Pancreas (tissue), 10 donors: ENCODE measurements at regions of chr7 and their contacts with region 1.

Region 1: DNA sequence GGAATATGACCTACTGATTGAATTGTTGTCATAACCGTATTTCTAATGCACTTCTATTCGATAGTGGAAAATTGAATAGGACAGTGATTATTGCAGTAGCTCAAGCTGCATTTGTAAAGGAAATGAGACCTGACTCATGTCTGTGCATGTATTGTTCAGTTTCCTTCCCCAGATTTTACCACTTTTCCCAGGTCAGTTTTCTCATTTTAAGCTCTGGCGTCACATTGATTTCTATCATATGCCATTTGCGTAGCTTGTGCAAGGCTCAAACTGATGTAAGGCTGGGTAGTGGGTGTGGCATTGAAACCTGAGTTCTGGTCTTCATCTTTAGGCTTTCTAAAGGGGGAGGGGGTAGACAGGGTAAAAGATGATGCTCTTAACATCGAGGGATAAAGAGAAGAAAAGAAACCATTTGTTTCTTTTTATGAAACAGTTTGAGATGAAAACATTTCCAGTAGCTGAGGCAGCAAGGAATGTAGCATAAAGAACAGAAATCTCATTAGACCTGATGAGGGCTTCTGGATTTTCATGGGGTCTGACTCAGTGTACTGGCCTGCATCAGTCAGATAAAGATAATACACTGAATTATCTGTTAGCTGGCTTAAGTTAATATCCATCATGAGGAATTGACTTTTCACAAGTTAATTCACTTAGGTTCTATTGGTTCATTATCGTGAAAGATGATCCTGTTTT is 182.3 kb upstream of the CDCA7L start:
- DNase-seq: no peak
- ATAC-seq: no peak
- H3K4me3 ChIP-seq: no peak overlapping the region
- H3K27ac ChIP-seq: no peak overlapping the region
- H3K4me1 ChIP-seq: no peaks in the 10 kb centered on the region
- H3K27me3 ChIP-seq: no peaks in the 10 kb centered on the region
- CTCF ChIP-seq: no peak

Region 2: GRCh38 chr7:21550826-21551544 is 577.0 kb before region 1 on chr7:
- intact Hi-C with region 1: no loop called
- DNase-seq: no peak
- ATAC-seq: peak in 2 of 4 donors; percentile 31 to 35
- H3K4me3 ChIP-seq: no peak overlapping the region
- H3K27ac ChIP-seq: no peak overlapping the region
- H3K4me1 ChIP-seq: no peaks in the 10 kb centered on the region
- H3K27me3 ChIP-seq: no peaks in the 10 kb centered on the region
- CTCF ChIP-seq: no peak

Region 3: DNA sequence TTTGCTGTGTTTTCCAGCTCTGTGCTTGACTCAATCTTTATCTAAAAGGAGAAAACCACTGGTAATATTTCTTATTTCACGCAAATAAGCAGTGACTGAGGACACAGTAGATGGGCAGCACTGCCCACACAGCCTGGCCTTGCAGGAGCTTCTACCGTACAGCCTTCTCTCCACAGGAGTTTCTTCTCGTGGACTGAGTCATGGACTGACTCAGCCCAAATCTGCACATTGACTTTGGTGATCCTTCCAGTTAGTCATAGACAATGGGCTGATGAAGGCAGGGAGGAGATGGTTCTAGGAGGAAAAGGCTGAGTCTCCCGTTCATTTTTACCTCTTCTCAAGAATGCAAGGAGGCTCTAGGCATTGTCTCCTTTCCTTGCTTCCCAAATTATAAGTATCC is 28.2 kb after region 1 on chr7:
- intact Hi-C with region 1: loop called in 1 of 3 experiments (anchors 5 kb)
- DNase-seq: no peak
- ATAC-seq: peak in 2 of 4 donors; percentile 25 to 46
- H3K4me3 ChIP-seq: no peak overlapping the region
- H3K27ac ChIP-seq: no peak overlapping the region
- H3K4me1 ChIP-seq: no peaks in the 10 kb centered on the region
- H3K27me3 ChIP-seq: no peaks in the 10 kb centered on the region
- CTCF ChIP-seq: no peak